Upper lobe of right lung (tissue), 1 donor: ENCODE measurements at regions of chr16 and their contacts with region 1.

Region 1: GRCh38 chr16:68237243-68238028 is 1.5 kb upstream of the ESRP2 start:
- DNase-seq: peak; percentile 99
- ATAC-seq: peak; percentile 84
- H3K4me3 ChIP-seq: peak overlapping the region; percentile 71
- H3K27ac ChIP-seq: peak overlapping the region; percentile 93
- H3K4me1 ChIP-seq: peaks cover 29% of the 10 kb centered on the region
- H3K27me3 ChIP-seq: no peaks in the 10 kb centered on the region
- CTCF ChIP-seq: no peak

Region 2: DNA sequence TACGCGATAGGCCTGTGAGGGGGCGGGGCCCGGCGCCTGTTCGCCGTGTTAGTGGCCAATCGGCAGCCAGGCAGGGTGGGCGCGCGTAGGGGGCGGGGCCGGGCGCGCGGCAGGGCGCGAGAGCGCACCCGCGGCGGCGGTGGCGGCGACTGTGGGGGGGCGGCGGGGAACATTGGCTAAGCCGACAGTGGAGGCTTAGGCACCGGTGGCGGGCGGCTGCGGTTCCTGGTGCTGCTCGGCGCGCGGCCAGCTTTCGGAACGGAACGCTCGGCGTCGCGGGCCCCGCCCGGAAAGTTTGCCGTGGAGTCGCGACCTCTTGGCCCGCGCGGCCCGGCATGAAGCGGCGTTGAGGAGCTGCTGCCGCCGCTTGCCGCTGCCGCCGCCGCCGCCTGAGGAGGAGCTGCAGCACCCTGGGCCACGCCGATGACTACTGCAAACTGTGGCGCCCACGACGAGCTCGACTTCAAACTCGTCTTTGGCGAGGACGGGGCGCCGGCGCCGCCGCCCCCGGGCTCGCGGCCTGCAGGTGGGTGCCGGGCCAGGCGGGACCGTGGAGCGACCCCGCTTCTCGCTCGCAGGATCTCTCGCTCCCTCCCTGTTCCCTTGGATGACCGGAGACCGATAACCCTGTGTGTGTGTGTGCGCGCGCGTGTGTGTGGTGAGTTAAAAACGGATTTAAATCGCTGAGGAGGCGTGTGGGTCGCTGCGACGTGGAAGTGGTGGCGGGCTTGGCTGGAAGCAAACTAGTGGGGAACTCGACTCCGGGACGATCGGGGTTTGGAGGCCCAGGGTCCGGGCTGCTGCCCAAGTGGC is 152.0 kb before region 1 on chr16 and contains the start of gene NFATC3:
- intact Hi-C with region 1: loop called (anchors 10 kb)
- DNase-seq: peak; percentile 100
- ATAC-seq: peak; percentile 94
- H3K4me3 ChIP-seq: peak within 1 kb of the TSS; percentile 81
- H3K27ac ChIP-seq: peak within 1 kb of the TSS; percentile 99
- H3K4me1 ChIP-seq: peaks cover 52% of the 10 kb centered on the region
- H3K27me3 ChIP-seq: no peaks in the 10 kb centered on the region
- CTCF ChIP-seq: no peak
- total RNA-seq, gene NFATC3: 74.5 TPM